K562 (cell line): ENCODE measurements at regions of chr6 and their contacts with region 1.

Region 1: DNA sequence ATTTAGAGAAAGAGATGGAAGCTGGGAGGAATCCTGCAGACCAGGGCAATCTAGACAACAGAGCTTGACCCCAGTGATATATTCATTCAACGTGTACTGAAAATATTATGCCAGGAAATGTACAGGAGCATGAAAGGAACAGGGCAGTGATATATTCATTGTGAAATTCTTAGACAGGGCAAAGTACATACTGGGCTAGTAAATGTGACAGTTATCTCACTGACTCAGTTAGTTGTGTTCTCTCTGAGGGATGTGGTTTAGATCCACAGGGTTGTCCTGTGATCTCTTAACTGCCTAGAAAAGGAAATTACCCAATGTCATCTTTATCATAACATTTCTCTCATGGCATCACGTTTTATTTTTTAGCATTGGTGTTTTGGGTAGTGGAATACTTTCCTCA is 891.3 kb downstream of the EYS start:
- DNase-seq: no peak
- ATAC-seq: no peak
- H3K4me3 ChIP-seq: no peak overlapping the region
- H3K27ac ChIP-seq: no peak overlapping the region
- H3K4me1 ChIP-seq: no peaks in the 10 kb centered on the region
- H3K27me3 ChIP-seq: no peaks in the 10 kb centered on the region
- CTCF ChIP-seq: no peak
- EP300 ChIP-seq: no peak
- POLR2A ChIP-seq: no peak
- RAD21 ChIP-seq: no peak

Region 2: GRCh38 chr6:64777924-64778785 is 37.6 kb before region 1 on chr6:
- CTCF ChIA-PET with region 1: no interaction called
- POLR2A ChIA-PET with region 1: no interaction called
- in situ Hi-C with region 1: no loop called
- intact Hi-C with region 1: loop called (anchors 5 kb)
- DNase-seq: no peak
- ATAC-seq: no peak
- H3K4me3 ChIP-seq: no peak overlapping the region
- H3K27ac ChIP-seq: no peak overlapping the region
- H3K4me1 ChIP-seq: no peaks in the 10 kb centered on the region
- H3K27me3 ChIP-seq: no peaks in the 10 kb centered on the region
- CTCF ChIP-seq: no peak
- EP300 ChIP-seq: no peak
- POLR2A ChIP-seq: no peak
- RAD21 ChIP-seq: no peak